Body of pancreas (tissue), 4 donors: ENCODE measurements at regions of chr13 and their contacts with region 1.

Region 1: GRCh38 chr13:102141625-102142472 is 260.0 kb downstream of the FGF14 start:
- DNase-seq: no peak
- ATAC-seq: no peak
- H3K4me3 ChIP-seq: no peak overlapping the region
- H3K27ac ChIP-seq: no peak overlapping the region
- H3K4me1 ChIP-seq: no peaks in the 10 kb centered on the region
- H3K27me3 ChIP-seq: no peaks in the 10 kb centered on the region
- CTCF ChIP-seq: peak in 6 of 7 experiments; percentile 52 to 62 (median 58)
- POLR2A ChIP-seq: no peak

Region 2: DNA sequence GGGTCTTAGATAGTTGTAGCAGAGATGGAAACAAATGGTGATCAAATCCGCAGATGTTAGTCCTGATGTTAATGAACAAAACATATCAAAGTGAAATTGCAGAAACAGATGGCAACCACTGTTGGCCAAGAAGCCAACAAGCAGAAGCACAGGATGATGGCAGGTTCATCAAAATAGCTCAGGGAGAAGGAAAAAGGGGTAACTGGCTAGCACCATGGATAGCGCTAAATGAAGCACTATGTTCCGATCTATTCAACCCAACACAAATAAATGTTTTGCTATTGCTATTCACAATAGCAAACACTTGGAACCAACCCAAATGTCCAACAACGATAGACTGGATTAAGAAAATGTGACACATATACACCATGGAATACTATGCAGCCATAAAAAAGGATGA is 153.7 kb before region 1 on chr13:
- intact Hi-C with region 1: no loop called
- DNase-seq: no peak
- ATAC-seq: no peak
- H3K4me3 ChIP-seq: no peak overlapping the region
- H3K27ac ChIP-seq: no peak overlapping the region
- H3K4me1 ChIP-seq: no peaks in the 10 kb centered on the region
- H3K27me3 ChIP-seq: no peaks in the 10 kb centered on the region
- CTCF ChIP-seq: no peak
- POLR2A ChIP-seq: no peak

Region 3: GRCh38 chr13:102452831-102453230 is 311.0 kb after region 1 on chr13:
- intact Hi-C with region 1: loop called (anchors 10 kb)
- DNase-seq: no peak
- ATAC-seq: no peak
- H3K4me3 ChIP-seq: no peak overlapping the region
- H3K27ac ChIP-seq: no peak overlapping the region
- H3K4me1 ChIP-seq: no peaks in the 10 kb centered on the region
- H3K27me3 ChIP-seq: no peaks in the 10 kb centered on the region
- CTCF ChIP-seq: no peak
- POLR2A ChIP-seq: no peak

Region 4: DNA sequence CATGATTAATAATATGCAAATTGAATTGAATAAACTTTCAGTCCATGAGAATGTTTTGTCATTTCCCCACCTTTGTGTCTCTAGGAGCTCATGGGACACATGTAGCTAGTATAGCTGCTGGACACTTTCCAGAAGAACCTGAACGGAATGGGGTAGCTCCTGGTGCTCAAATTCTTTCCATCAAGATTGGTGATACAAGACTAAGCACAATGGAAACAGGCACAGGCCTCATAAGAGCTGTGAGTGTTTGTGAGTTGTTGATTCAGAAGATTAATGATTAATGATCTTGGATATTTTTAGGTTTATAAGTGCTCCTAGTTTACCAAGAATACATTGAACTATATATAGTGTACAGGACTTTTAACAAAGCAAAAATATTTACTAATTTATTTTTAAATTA is 485.1 kb after region 1 on chr13:
- intact Hi-C with region 1: no loop called
- DNase-seq: no peak
- ATAC-seq: no peak
- H3K4me3 ChIP-seq: no peak overlapping the region
- H3K27ac ChIP-seq: no peak overlapping the region
- H3K4me1 ChIP-seq: peaks cover 4% of the 10 kb centered on the region
- H3K27me3 ChIP-seq: no peaks in the 10 kb centered on the region
- CTCF ChIP-seq: no peak
- POLR2A ChIP-seq: no peak